ENCODE measurements at regions of chr11 and their contacts with region 1.

Region 1: DNA sequence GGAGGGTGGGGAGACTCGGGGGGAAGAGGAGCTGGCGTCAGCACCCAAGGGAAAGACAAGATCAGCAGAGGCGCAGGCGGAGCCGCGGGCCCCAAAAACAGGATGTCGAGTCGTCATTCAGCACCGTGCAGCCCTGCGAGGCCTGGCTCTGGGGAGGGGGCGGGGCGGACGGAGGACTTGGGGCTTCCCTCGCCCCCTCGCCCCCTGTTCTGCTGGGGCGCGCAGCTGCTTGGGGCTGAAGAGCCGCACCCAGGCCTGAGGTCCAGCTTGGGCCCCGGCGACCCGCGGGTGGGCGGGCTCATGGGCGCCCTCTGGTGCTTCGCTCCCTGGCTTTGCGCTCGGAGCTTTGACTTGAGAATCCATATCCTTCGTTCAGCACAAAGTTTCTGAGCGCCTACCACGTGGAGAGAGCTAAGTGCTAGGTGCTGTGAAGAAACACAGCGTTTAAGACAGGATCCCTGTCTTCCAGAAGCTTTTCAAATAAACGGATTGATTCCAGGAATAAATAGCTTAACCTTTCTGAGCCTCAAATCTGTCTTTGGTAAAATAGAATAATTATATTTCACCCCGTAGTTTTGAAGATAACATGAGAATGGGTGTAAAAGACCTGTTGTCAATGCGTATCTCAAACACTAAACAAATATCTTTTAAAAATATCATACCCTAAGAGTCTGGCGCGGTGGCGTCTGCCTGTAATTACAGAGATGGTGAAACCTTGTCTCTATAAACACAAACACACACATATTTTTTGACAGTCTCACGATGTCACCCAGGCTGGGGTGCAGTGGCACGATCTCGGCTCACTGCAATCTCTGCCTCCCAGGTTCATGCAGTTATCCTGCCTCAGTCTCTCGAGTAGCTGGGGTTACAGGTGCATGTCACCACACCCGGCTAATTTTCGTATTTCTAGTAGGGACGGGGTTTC is 929 bp upstream of the RHOG start:
- DNase-seq: peak; percentile 85 to 98 (median 92)
- ATAC-seq: peak; percentile 72
- H3K4me3 ChIP-seq: peak overlapping the region; percentile 95
- H3K4me3 Mint-ChIP-seq: peak overlapping the region; percentile 97
- H3K27ac ChIP-seq: peak overlapping the region; percentile 95 to 97
- H3K27ac Mint-ChIP-seq: peak overlapping the region; percentile 95
- H3K4me1 ChIP-seq: peaks cover 40% of the 10 kb centered on the region
- H3K4me1 Mint-ChIP-seq: peaks cover 61% of the 10 kb centered on the region
- H3K27me3 ChIP-seq: no peaks in the 10 kb centered on the region
- H3K27me3 Mint-ChIP-seq: no peaks in the 10 kb centered on the region
- CTCF ChIP-seq: peak; percentile 92

Region 2: DNA sequence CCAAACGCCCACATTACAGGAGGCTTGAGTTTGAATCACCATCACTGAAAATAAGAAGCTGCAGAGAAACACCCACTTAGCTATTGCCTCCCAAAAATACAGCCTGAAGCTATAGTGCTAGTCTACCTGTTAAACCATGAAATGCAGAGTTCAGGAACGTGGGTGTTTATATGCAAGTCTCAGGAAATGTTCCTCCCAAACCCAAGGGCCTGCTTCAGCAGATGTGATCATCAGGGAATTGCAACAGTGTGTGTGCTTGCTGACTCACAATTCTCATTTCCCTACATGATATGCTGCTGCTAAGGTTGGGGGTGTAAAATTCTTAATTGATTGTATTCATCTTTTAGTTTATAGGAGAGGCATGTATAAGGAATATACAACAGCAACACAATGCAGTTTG is 94.0 kb before region 1 on chr11:
- CTCF ChIA-PET with region 1: no interaction called
- POLR2A ChIA-PET with region 1: no interaction called
- intact Hi-C with region 1: no loop called
- DNase-seq: peak in 1 of 14 experiments; percentile 12
- ATAC-seq: no peak
- H3K4me3 ChIP-seq: no peak overlapping the region
- H3K4me3 Mint-ChIP-seq: no peak overlapping the region
- H3K27ac ChIP-seq: no peak overlapping the region
- H3K27ac Mint-ChIP-seq: no peak overlapping the region
- H3K4me1 ChIP-seq: no peaks in the 10 kb centered on the region
- H3K4me1 Mint-ChIP-seq: peaks cover 6% of the 10 kb centered on the region
- H3K27me3 ChIP-seq: no peaks in the 10 kb centered on the region
- H3K27me3 Mint-ChIP-seq: no peaks in the 10 kb centered on the region
- CTCF ChIP-seq: no peak

Region 3: GRCh38 chr11:3797329-3798095 is 44.2 kb before region 1 on chr11 and contains the start of gene NUP98:
- CTCF ChIA-PET with region 1: interaction called, 5 read pairs
- POLR2A ChIA-PET with region 1: interaction called, 67 read pairs
- intact Hi-C with region 1: loop called (anchors 2 to 5 kb)
- DNase-seq: peak; percentile 98 to 100 (median 99)
- ATAC-seq: peak; percentile 93
- H3K4me3 ChIP-seq: peak within 1 kb of the TSS; percentile 98
- H3K4me3 Mint-ChIP-seq: peak within 1 kb of the TSS; percentile 89
- H3K27ac ChIP-seq: peak within 1 kb of the TSS; percentile 95
- H3K27ac Mint-ChIP-seq: peak within 1 kb of the TSS; percentile 97
- H3K4me1 ChIP-seq: peaks cover 37% of the 10 kb centered on the region
- H3K4me1 Mint-ChIP-seq: peaks cover 46% of the 10 kb centered on the region
- H3K27me3 ChIP-seq: no peaks in the 10 kb centered on the region
- H3K27me3 Mint-ChIP-seq: no peaks in the 10 kb centered on the region
- CTCF ChIP-seq: no peak
- total RNA-seq, gene NUP98: 161 to 186 TPM

Region 4: DNA sequence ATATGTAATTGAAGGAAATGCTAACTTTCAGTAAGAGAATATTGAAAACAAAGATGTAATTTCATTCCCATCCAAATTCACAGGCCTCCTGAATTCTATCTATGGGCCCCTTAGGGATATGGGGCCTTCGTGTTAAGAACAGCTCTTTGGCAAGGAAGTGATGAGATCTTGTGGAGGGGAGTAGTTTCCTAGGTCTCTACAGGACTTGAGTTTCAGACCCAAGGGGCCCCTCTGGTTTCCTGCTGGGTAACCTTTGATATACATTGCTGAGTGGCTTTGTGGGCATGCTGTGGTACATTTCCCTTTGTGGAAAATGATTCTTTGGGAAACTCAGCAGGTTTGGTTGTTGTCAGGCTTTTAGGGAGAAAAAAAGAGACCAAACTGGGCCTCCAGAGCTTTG is 20.0 kb after region 1 on chr11:
- CTCF ChIA-PET with region 1: interaction called, 216 read pairs
- POLR2A ChIA-PET with region 1: interaction called, 12 read pairs
- intact Hi-C with region 1: no loop called
- DNase-seq: peak in 2 of 14 experiments; percentile 22 to 41
- ATAC-seq: no peak
- H3K4me3 ChIP-seq: peak overlapping the region; percentile 30
- H3K4me3 Mint-ChIP-seq: peak overlapping the region; percentile 82
- H3K27ac ChIP-seq: peak overlapping the region in 1 of 2 donors; percentile 36
- H3K27ac Mint-ChIP-seq: peak overlapping the region; percentile 99
- H3K4me1 ChIP-seq: peaks cover 90% of the 10 kb centered on the region
- H3K4me1 Mint-ChIP-seq: peaks cover 90% of the 10 kb centered on the region
- H3K27me3 ChIP-seq: no peaks in the 10 kb centered on the region
- H3K27me3 Mint-ChIP-seq: no peaks in the 10 kb centered on the region
- CTCF ChIP-seq: no peak

Region 5: GRCh38 chr11:3947061-3947460 is 105.4 kb after region 1 on chr11:
- CTCF ChIA-PET with region 1: interaction called, 5 read pairs
- POLR2A ChIA-PET with region 1: interaction called, 28 read pairs
- intact Hi-C with region 1: no loop called
- DNase-seq: peak in 13 of 14 experiments; percentile 25 to 94 (median 42)
- ATAC-seq: peak; percentile 75
- H3K4me3 ChIP-seq: peak overlapping the region; percentile 39
- H3K4me3 Mint-ChIP-seq: peak overlapping the region; percentile 72
- H3K27ac ChIP-seq: peak overlapping the region; percentile 80 to 87
- H3K27ac Mint-ChIP-seq: peak overlapping the region; percentile 96
- H3K4me1 ChIP-seq: peaks cover 87% of the 10 kb centered on the region
- H3K4me1 Mint-ChIP-seq: peaks cover 95% of the 10 kb centered on the region
- H3K27me3 ChIP-seq: no peaks in the 10 kb centered on the region
- H3K27me3 Mint-ChIP-seq: no peaks in the 10 kb centered on the region
- CTCF ChIP-seq: no peak

Region 6: GRCh38 chr11:4094348-4095291 is 252.9 kb after region 1 on chr11 and contains the start of gene RRM1:
- CTCF ChIA-PET with region 1: no interaction called
- POLR2A ChIA-PET with region 1: interaction called, 11 read pairs
- intact Hi-C with region 1: no loop called
- DNase-seq: peak; percentile 82 to 97 (median 90)
- ATAC-seq: peak; percentile 82
- H3K4me3 ChIP-seq: peak within 1 kb of the TSS; percentile 93
- H3K4me3 Mint-ChIP-seq: peak within 1 kb of the TSS; percentile 99
- H3K27ac ChIP-seq: peak within 1 kb of the TSS; percentile 69 to 93
- H3K27ac Mint-ChIP-seq: peak within 1 kb of the TSS; percentile 99
- H3K4me1 ChIP-seq: peaks cover 72% of the 10 kb centered on the region
- H3K4me1 Mint-ChIP-seq: peaks cover 89% of the 10 kb centered on the region
- H3K27me3 ChIP-seq: no peaks in the 10 kb centered on the region
- H3K27me3 Mint-ChIP-seq: no peaks in the 10 kb centered on the region
- CTCF ChIP-seq: no peak
- total RNA-seq, gene RRM1: 64.7 to 73.1 TPM

Measured in CD4-positive, alpha-beta T cell (primary cell).